CD4-positive, alpha-beta memory T cell (primary cell): ENCODE measurements at regions of chr2 and their contacts with region 1.

Region 1: DNA sequence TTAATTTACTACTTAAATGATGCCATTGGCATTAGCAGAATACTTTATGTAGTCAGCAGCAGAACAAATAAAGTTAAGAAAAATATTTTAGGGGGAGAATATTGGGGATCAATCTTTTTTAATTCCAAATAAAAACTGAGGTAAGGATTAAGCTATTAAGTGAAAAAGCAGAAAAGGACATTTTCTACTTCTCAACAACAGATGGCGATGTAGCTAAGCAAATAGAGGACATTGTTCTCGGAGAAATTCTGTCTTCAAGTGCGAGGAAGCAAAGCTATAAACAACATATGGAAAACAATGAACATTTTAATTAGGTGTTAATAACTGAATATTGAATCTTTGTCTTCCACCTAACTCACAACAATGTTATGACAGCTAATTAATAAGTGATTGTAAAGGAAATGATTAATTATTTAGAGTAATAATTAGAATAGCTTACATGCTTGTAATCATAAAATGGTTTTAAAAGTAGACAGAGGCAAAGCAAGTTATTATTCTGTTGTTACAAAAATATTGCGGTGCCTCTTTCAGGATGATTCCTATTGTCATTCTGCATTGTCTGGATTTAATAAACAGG is 32.9 kb upstream of the CCDC93 start:
- DNase-seq: peak in 4 of 5 donors; percentile 24 to 34 (median 26)
- H3K4me3 ChIP-seq: no peak overlapping the region
- H3K4me3 Mint-ChIP-seq: no peak overlapping the region
- H3K27ac ChIP-seq: no peak overlapping the region
- H3K27ac Mint-ChIP-seq: no peak overlapping the region
- H3K4me1 ChIP-seq: no peaks in the 10 kb centered on the region
- H3K4me1 Mint-ChIP-seq: no peaks in the 10 kb centered on the region
- H3K27me3 ChIP-seq: no peaks in the 10 kb centered on the region
- H3K27me3 Mint-ChIP-seq: peaks cover 24 to 45% of the 10 kb centered on the region in 2 donors

Region 2: DNA sequence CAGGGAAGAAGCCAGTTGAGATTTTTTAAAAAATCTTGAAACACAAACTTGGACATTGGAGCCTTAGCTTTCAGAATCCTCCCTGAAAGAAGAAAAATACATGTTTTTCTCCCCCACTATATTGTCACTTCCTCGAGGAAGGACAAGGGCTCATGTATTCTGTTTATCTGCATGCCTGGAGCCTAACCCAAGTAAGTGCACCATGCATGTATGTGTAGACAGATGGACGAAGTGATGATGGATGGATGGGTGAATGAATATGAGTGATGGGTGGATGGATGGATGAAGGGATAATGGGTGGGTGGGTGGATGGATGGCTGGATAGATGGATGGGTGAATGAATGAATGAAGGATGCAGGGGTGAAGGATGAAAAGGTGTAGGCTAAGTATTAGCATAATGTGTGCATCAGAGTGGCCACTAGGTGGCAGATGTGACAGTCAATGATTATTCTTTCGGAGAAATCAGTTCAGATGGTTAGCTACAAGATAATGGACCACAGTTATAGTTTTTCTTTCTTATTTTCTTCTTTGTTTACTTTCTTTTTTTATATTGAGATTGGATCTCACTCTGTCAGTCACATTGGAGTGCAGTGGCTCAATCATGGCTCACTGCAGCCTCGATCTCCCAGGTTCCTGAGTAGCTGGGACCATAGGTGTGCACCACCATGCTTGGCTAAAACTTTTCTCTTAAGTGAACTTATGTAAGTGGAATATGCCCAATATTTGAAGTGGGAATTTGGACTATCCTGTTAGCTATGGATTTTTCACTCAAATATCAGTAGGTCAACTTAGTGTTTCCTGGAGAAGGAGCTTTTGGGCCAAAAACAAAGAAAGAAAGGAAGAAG is 14.3 kb before region 1 on chr2:
- CTCF ChIA-PET with region 1: interaction called, 17 read pairs
- POLR2A ChIA-PET with region 1: no interaction called
- intact Hi-C with region 1: no loop called
- DNase-seq: peak in 3 of 5 donors; percentile 27 to 32 (median 29)
- H3K4me3 ChIP-seq: no peak overlapping the region
- H3K4me3 Mint-ChIP-seq: no peak overlapping the region
- H3K27ac ChIP-seq: no peak overlapping the region
- H3K27ac Mint-ChIP-seq: peak overlapping the region in 1 of 7 donors; percentile 5
- H3K4me1 ChIP-seq: no peaks in the 10 kb centered on the region
- H3K4me1 Mint-ChIP-seq: no peaks in the 10 kb centered on the region
- H3K27me3 ChIP-seq: peaks cover 9% of the 10 kb centered on the region
- H3K27me3 Mint-ChIP-seq: peaks cover 26 to 31% of the 10 kb centered on the region in 2 donors

Region 3: DNA sequence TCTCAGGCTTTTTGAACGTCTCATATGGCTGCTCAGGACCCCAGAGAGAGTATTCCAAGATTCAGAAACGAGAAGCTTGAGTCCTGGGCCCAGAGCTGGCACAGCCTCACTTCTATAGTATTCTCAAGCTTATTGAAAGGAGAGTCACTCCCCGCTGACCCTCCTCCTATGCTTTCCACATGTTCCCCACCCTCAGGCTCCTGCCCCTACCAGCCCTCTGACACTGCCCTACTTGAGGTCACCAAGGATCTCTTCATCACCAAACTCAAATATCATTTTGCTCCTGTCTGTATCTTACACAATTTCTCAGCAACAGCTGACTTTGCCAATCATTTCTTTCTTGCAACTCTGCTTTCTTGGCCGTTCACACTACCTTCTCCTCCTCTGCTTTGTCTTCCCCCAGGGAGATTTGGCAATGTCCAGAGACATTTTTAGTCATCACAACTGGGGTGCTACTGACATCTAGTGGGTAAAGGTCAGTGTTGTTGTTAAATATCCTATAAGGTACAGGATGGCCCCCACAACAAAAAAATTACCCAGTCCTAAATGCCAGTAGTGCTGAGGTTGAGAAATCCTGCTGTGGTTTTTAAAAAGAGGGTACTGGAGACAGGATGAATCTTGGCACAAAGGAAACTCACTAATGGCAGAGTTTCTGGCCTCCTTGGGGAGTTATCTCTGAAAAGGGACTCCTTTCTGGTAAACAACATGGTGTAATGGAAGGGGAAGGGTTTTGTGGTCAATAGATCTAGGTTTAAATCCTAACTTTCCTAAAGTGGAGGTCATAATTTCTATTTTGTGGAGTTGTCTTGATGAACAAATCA is 14.6 kb after region 1 on chr2:
- CTCF ChIA-PET with region 1: interaction called, 23 read pairs
- POLR2A ChIA-PET with region 1: no interaction called
- intact Hi-C with region 1: no loop called
- DNase-seq: no peak
- H3K4me3 ChIP-seq: no peak overlapping the region
- H3K4me3 Mint-ChIP-seq: no peak overlapping the region
- H3K27ac ChIP-seq: no peak overlapping the region
- H3K27ac Mint-ChIP-seq: peak overlapping the region in 2 of 7 donors; percentile 44 to 54
- H3K4me1 ChIP-seq: peaks cover 7% of the 10 kb centered on the region
- H3K4me1 Mint-ChIP-seq: peaks cover 1 to 8% (median 6%) of the 10 kb centered on the region in 4 donors
- H3K27me3 ChIP-seq: peaks cover 3% of the 10 kb centered on the region
- H3K27me3 Mint-ChIP-seq: peaks cover 10 to 20% of the 10 kb centered on the region in 2 donors

Region 4: GRCh38 chr2:118791483-118791882 is 744.8 kb after region 1 on chr2:
- CTCF ChIA-PET with region 1: no interaction called
- POLR2A ChIA-PET with region 1: no interaction called
- intact Hi-C with region 1: no loop called
- DNase-seq: no peak
- H3K4me3 ChIP-seq: no peak overlapping the region
- H3K4me3 Mint-ChIP-seq: no peak overlapping the region
- H3K27ac ChIP-seq: no peak overlapping the region
- H3K27ac Mint-ChIP-seq: no peak overlapping the region
- H3K4me1 ChIP-seq: no peaks in the 10 kb centered on the region
- H3K4me1 Mint-ChIP-seq: no peaks in the 10 kb centered on the region
- H3K27me3 ChIP-seq: no peaks in the 10 kb centered on the region
- H3K27me3 Mint-ChIP-seq: peaks cover 11 to 17% of the 10 kb centered on the region in 2 donors

Region 5: DNA sequence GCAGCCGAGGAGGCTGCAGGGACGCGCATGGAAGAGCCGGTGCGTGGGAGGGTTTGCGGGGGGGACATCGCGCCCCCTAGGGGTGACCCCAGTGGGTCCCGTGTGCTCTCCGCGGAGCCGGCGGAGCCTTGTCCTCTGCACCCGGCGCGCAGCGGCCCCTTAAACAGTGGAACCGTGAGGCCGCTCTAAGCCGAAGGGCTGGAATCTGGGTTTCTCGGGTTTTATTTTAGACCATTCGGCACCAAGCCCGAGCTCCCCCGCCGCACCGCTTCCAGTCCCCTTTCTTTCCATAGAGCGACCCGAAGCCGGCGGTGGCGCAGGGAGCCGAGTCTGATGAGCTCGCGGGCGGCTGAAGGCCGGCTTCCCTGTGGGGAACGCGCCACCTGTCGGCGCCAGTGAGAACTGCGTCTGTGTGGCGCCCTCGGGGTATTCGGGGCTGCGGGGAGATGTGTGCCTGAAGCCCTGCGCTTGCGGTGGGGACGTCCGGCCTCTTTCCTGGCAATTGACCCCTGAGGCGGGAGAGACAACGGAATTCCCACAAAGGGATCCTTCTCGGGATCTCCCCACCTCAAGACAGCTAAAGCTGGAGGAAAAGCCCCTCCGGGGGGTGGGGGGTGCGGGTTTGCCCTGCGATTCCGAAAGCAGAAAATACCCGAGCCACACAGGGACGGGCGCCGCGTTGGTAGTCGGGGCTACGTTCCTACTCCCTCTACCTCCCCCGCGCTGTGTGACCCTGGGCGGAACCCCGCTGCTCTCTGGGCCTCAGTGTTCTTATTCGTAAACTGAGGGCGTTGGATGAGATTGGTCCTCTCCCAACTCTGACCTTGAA is 808.9 kb after region 1 on chr2:
- CTCF ChIA-PET with region 1: interaction called, 59 read pairs
- POLR2A ChIA-PET with region 1: no interaction called
- intact Hi-C with region 1: loop called (anchors 1 kb)
- DNase-seq: peak; percentile 60 to 84 (median 77)
- H3K4me3 ChIP-seq: no peak overlapping the region
- H3K4me3 Mint-ChIP-seq: peak overlapping the region; percentile 58 to 80 (median 64)
- H3K27ac ChIP-seq: no peak overlapping the region
- H3K27ac Mint-ChIP-seq: peak overlapping the region in 1 of 7 donors; percentile 68
- H3K4me1 ChIP-seq: peaks cover 19% of the 10 kb centered on the region
- H3K4me1 Mint-ChIP-seq: peaks cover 17 to 33% (median 21%) of the 10 kb centered on the region in 4 donors
- H3K27me3 ChIP-seq: peaks cover 65% of the 10 kb centered on the region
- H3K27me3 Mint-ChIP-seq: peaks cover 60 to 64% of the 10 kb centered on the region in 2 donors

Region 6: DNA sequence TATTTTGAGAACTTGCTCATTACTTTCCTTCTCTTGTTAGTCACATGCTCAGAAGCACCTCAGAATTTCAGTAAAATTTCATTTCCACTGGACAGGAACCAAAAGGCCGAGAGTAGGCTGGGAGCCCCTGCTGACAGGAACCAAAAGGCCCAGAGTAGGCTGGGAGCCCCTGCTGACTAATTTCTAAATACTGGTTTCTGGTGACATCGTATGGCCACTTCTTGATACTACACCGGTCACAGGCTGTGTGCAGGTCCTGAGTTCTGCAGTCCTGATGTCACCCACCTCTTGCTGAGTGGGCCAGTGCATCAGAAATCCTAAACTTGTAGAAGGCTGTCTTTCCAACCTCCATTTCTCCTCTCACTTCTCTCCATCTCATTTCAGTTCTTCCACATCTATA is 818.4 kb after region 1 on chr2:
- CTCF ChIA-PET with region 1: interaction called, 6 read pairs
- POLR2A ChIA-PET with region 1: no interaction called
- intact Hi-C with region 1: loop called (anchors 2 kb)
- DNase-seq: peak in 1 of 5 donors; percentile 23
- H3K4me3 ChIP-seq: no peak overlapping the region
- H3K4me3 Mint-ChIP-seq: no peak overlapping the region
- H3K27ac ChIP-seq: no peak overlapping the region
- H3K27ac Mint-ChIP-seq: no peak overlapping the region
- H3K4me1 ChIP-seq: no peaks in the 10 kb centered on the region
- H3K4me1 Mint-ChIP-seq: no peaks in the 10 kb centered on the region
- H3K27me3 ChIP-seq: peaks cover 5% of the 10 kb centered on the region
- H3K27me3 Mint-ChIP-seq: peaks cover 31 to 32% of the 10 kb centered on the region in 2 donors

Region 7: DNA sequence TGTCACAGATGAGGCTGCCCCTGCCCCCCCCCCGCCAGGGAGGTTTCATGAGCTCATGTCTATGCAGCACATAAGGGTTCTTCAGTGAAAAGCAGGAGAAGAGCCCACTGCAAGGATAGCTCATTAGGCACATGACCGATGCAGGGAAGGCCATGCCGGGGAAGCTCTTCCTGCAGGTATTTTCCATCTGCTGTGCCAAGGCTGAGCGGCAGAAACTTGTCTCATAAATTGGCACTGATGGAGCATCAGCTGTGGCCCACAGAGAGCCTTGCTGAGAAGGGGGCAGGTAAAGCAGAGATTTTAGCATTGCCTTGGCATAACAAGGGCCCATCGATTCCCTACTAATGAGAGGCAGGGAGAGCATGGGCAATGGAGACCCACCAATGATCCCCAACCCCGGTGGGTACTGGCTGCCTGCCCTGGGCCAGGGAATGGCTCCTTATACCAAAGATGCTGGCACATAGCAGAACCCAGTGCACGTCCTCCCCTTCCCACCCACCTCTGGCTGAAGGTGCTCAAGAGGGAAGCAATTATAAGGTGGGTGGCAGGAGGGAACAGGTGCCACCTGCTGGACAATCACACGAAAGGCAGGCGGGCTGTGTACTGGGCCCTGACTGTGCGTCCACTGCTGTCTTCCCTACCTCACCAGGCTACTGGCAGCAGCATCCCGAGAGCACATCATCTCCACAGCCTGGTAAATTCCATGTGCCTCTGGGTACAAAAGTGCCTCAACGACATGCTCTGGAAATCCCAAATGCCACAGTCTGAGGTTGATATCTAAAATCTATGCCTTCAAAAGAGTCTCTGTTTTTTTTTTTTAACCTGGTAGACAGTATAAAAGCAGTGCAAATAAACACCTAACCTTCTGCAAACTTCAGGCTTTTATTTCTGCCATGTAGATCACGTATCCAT is 1218.3 kb after region 1 on chr2:
- CTCF ChIA-PET with region 1: interaction called, 6 read pairs
- POLR2A ChIA-PET with region 1: no interaction called
- intact Hi-C with region 1: loop called (anchors 10 kb)
- DNase-seq: peak in 3 of 5 donors; percentile 5 to 11 (median 9)
- H3K4me3 ChIP-seq: no peak overlapping the region
- H3K4me3 Mint-ChIP-seq: no peak overlapping the region
- H3K27ac ChIP-seq: no peak overlapping the region
- H3K27ac Mint-ChIP-seq: no peak overlapping the region
- H3K4me1 ChIP-seq: no peaks in the 10 kb centered on the region
- H3K4me1 Mint-ChIP-seq: no peaks in the 10 kb centered on the region
- H3K27me3 ChIP-seq: no peaks in the 10 kb centered on the region
- H3K27me3 Mint-ChIP-seq: peaks cover 2 to 4% of the 10 kb centered on the region in 2 donors